Activated CD4-positive, alpha-beta T cell treated with anti-CD3 and anti-CD28 coated beads for 36 hours (primary cell): ENCODE measurements at regions of chr1 and their contacts with region 1.

Region 1: DNA sequence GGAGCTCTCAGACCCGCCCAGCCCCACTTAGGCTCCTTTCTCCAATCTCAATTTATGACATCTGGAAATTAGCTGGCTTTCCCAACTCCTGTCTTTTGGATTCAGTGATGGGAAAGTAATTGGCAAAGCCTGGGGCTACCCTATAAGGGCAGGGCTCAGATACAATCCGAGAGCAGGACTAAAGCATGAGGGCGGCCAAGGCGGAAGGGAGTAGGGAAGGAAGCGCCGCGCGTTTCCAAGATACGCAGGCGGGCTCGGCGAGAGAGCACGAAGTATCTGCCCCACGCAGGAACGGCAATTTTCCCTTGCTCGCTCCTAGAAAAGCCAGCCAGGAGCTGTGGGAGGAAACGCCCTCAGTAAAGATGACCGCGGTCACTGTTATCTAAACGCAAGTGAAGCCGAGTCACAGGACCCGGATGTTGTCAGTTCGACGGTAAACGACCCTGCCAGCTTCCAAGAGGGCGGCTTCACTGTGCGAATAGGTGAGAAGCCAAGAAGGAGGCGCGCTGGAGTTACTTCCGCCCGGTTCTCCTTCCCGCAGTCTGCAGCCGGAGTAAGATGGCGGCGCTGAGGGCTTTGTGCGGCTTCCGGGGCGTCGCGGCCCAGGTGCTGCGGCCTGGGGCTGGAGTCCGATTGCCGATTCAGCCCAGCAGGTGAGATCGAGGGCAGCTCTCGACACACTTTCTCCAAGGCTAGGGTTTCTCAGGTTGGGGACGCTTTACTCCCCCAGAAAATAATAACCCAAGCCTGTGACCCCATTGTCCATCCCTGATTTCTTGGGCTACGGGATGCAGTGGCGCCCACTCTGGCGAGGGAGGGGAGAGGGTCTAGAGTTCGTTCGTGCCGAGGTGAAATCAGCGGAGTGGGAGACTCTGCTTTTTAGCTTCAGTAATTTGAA is at the start of gene NDUFS2:
- DNase-seq: peak; percentile 97
- ATAC-seq: peak; percentile 99
- H3K4me3 Mint-ChIP-seq: peak within 1 kb of the TSS; percentile 92
- H3K27ac Mint-ChIP-seq: peak within 1 kb of the TSS; percentile 95
- H3K4me1 Mint-ChIP-seq: peaks cover 50% of the 10 kb centered on the region
- H3K27me3 Mint-ChIP-seq: no peaks in the 10 kb centered on the region
- total RNA-seq, gene NDUFS2: 71.8 to 92.0 TPM

Region 2: GRCh38 chr1:161165742-161166668 is 36.1 kb before region 1 on chr1 and contains the start of gene PPOX:
- CTCF ChIA-PET with region 1: interaction called, 7 read pairs
- POLR2A ChIA-PET with region 1: interaction called, 4 read pairs
- intact Hi-C with region 1: loop called (anchors 1 kb)
- DNase-seq: peak; percentile 96
- ATAC-seq: peak; percentile 97
- H3K4me3 Mint-ChIP-seq: peak within 1 kb of the TSS; percentile 87
- H3K27ac Mint-ChIP-seq: peak within 1 kb of the TSS; percentile 90
- H3K4me1 Mint-ChIP-seq: peaks cover 44% of the 10 kb centered on the region
- H3K27me3 Mint-ChIP-seq: no peaks in the 10 kb centered on the region
- total RNA-seq, gene PPOX: 21.5 to 28.8 TPM

Region 3: GRCh38 chr1:161185282-161185682 is 16.8 kb before region 1 on chr1:
- CTCF ChIA-PET with region 1: interaction called, 4 read pairs
- POLR2A ChIA-PET with region 1: interaction called, 6 read pairs
- intact Hi-C with region 1: loop called (anchors 1 to 2 kb)
- DNase-seq: peak; percentile 86
- ATAC-seq: peak; percentile 71
- H3K4me3 Mint-ChIP-seq: peak overlapping the region; percentile 50
- H3K27ac Mint-ChIP-seq: peak overlapping the region; percentile 90
- H3K4me1 Mint-ChIP-seq: peaks cover 79% of the 10 kb centered on the region
- H3K27me3 Mint-ChIP-seq: no peaks in the 10 kb centered on the region

Region 4: GRCh38 chr1:161314201-161314981 is 112.3 kb after region 1 on chr1 and contains the start of gene SDHC:
- CTCF ChIA-PET with region 1: interaction called, 4 read pairs
- POLR2A ChIA-PET with region 1: no interaction called
- intact Hi-C with region 1: loop called (anchors 1 to 5 kb)
- DNase-seq: peak; percentile 94
- ATAC-seq: peak; percentile 98
- H3K4me3 Mint-ChIP-seq: peak within 1 kb of the TSS; percentile 96
- H3K27ac Mint-ChIP-seq: peak within 1 kb of the TSS; percentile 96
- H3K4me1 Mint-ChIP-seq: peaks cover 21% of the 10 kb centered on the region
- H3K27me3 Mint-ChIP-seq: no peaks in the 10 kb centered on the region
- total RNA-seq, gene SDHC: 191 to 235 TPM